H1 (cell line): ENCODE measurements at regions of chr4 and their contacts with region 1.

Region 1: GRCh38 chr4:158667651-158668198 is 4.0 kb downstream of the C4orf46 start:
- DNase-seq: no peak
- H3K4me3 ChIP-seq: no peak overlapping the region
- H3K27ac ChIP-seq: no peak overlapping the region
- H3K4me1 ChIP-seq: peaks cover 0 to 1% (median under 1%) of the 10 kb centered on the region in 4 experiments; a peak in 2 of 7 replicates
- H3K27me3 ChIP-seq: no peaks in the 10 kb centered on the region
- CTCF ChIP-seq: peak; percentile 51 to 66 (median 63)
- EP300 ChIP-seq: no peak
- POLR2A ChIP-seq: no peak
- RAD21 ChIP-seq: peak; percentile 54 to 62

Region 2: GRCh38 chr4:158656439-158656838 is 11.3 kb before region 1 on chr4:
- CTCF ChIA-PET with region 1: interaction called, 26 read pairs
- POLR2A ChIA-PET with region 1: interaction called, 6 read pairs
- DNase-seq: no peak
- H3K4me3 ChIP-seq: no peak overlapping the region
- H3K27ac ChIP-seq: no peak overlapping the region
- H3K4me1 ChIP-seq: peaks cover 0 to 2% (median 0%) of the 10 kb centered on the region in 4 experiments; a peak in 2 of 7 replicates
- H3K27me3 ChIP-seq: no peaks in the 10 kb centered on the region
- CTCF ChIP-seq: no peak
- EP300 ChIP-seq: no peak
- POLR2A ChIP-seq: no peak
- RAD21 ChIP-seq: no peak

Region 3: DNA sequence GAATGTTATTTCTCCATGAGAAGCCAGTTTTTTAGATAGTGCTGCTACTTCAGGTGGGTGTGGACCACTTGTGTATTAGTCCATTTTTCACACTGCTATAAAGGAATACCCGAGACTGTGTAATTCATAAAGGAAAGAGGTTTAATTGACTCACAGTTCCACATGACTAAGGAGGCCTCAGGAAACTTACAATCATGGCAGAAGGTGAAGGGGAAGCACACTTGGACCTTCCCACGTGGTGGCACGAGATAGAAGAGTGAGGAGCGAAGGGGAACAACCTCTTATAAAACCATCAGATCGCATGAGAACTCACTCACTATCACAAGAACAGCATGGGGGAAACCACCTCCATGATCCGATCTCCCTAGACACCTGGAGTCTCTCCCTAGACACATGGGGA is 58.9 kb after region 1 on chr4:
- CTCF ChIA-PET with region 1: no interaction called
- POLR2A ChIA-PET with region 1: no interaction called
- DNase-seq: no peak
- H3K4me3 ChIP-seq: no peak overlapping the region
- H3K27ac ChIP-seq: no peak overlapping the region
- H3K4me1 ChIP-seq: peaks cover 0 to 3% (median 0%) of the 10 kb centered on the region in 4 experiments; a peak in 2 of 7 replicates
- H3K27me3 ChIP-seq: no peaks in the 10 kb centered on the region; a peak in 1 of 7 replicates
- CTCF ChIP-seq: no peak
- EP300 ChIP-seq: no peak
- POLR2A ChIP-seq: no peak
- RAD21 ChIP-seq: no peak